CD14-positive monocyte (primary cell): ENCODE measurements at regions of chrX and their contacts with region 1.

Region 1: GRCh38 chrX:130139474-130140201 is 26.0 kb downstream of the AIFM1 start:
- DNase-seq: no peak
- H3K4me3 ChIP-seq: no peak overlapping the region
- H3K4me3 Mint-ChIP-seq: no peak overlapping the region
- H3K27ac ChIP-seq: no peak overlapping the region
- H3K27ac Mint-ChIP-seq: no peak overlapping the region
- H3K4me1 ChIP-seq: no peaks in the 10 kb centered on the region
- H3K4me1 Mint-ChIP-seq: no peaks in the 10 kb centered on the region
- H3K27me3 ChIP-seq: no peaks in the 10 kb centered on the region
- H3K27me3 Mint-ChIP-seq: peaks cover 0 to 2% (median 0%) of the 10 kb centered on the region in 3 donors
- CTCF ChIP-seq: no peak

Region 2: DNA sequence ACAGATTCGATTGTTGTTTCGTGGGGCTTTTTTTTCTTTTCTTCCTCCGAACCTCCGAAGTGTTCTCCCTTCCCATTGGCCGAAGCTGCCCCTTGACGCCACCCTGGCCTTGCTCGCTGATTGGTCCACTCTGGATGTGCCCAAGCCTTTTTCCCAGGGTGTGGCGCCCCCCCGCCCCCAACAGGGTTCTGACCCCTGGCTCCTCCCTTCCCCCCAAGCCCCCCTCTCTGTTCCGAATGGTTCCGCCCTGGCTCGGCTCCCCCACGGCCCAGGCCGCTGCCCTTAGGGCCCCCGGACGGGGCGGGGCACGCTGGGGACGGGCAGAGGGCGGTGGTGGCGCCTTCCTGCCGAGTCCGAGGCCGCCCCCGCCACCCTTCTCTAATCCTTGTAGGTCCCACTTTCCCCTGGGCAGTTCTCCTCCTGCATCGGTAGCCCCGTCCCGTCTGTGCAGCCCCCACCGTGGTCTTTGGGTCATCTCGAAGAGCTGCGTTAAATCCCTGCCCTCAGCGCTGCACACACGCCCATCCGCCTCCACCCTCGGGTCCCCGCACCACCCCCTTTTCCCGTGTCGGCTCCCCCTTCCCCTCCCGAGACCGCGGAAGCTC is 208.1 kb before region 1 on chrX:
- intact Hi-C with region 1: no loop called
- DNase-seq: peak; percentile 80 to 94 (median 92)
- H3K4me3 ChIP-seq: peak overlapping the region; percentile 77 to 78 (median 78)
- H3K4me3 Mint-ChIP-seq: peak overlapping the region; percentile 80 to 89
- H3K27ac ChIP-seq: peak overlapping the region; percentile 84
- H3K27ac Mint-ChIP-seq: peak overlapping the region; percentile 88 to 97 (median 93)
- H3K4me1 ChIP-seq: peaks cover 4 to 10% of the 10 kb centered on the region in 2 donors
- H3K4me1 Mint-ChIP-seq: peaks cover 12% of the 10 kb centered on the region
- H3K27me3 ChIP-seq: peaks cover 0 to 8% of the 10 kb centered on the region in 2 donors
- H3K27me3 Mint-ChIP-seq: peaks cover 13 to 16% (median 14%) of the 10 kb centered on the region in 3 donors
- CTCF ChIP-seq: no peak

Region 3: GRCh38 chrX:130196466-130196865 is 56.8 kb after region 1 on chrX:
- intact Hi-C with region 1: loop called in 1 of 2 experiments (anchors 10 kb)
- DNase-seq: no peak
- H3K4me3 ChIP-seq: no peak overlapping the region
- H3K4me3 Mint-ChIP-seq: no peak overlapping the region
- H3K27ac ChIP-seq: no peak overlapping the region
- H3K27ac Mint-ChIP-seq: no peak overlapping the region
- H3K4me1 ChIP-seq: peaks cover 4 to 5% of the 10 kb centered on the region in 2 donors
- H3K4me1 Mint-ChIP-seq: peaks cover 3% of the 10 kb centered on the region
- H3K27me3 ChIP-seq: no peaks in the 10 kb centered on the region
- H3K27me3 Mint-ChIP-seq: peaks cover 0 to 9% (median 2%) of the 10 kb centered on the region in 3 donors
- CTCF ChIP-seq: no peak